HCT116 (cell line): ENCODE measurements at regions of chr2 and their contacts with region 1.

Region 1: DNA sequence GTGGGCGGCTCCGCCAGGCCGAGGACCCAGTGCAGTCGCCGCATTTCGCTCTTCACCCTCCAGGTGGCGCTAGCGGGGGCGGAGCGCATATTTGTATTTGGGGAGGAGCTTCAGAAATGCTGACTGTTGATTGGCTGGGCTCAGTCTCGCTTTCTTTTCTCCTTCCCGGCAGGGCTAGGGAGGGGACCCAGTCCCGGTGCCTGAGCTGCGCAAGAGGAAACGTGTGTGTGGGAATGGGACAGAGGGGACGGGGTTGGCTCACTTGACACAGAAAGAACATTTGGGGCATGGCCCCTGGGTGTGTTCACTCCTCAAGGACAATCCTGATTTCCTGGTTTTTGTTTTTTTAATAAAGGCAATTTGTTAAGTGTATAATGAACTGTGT is 20.3 kb upstream of the DNMT3A start:
- DNase-seq: peak; percentile 80
- ATAC-seq: peak; percentile 98
- H3K4me3 ChIP-seq: peak overlapping the region; percentile 32 to 49
- H3K27ac ChIP-seq: no peak overlapping the region
- H3K4me1 ChIP-seq: peaks cover 0 to 14% of the 10 kb centered on the region in 2 experiments; a peak in 2 of 4 replicates
- H3K27me3 ChIP-seq: no peaks in the 10 kb centered on the region
- CTCF ChIP-seq: peak; percentile 74 to 96 (median 93)
- POLR2A ChIP-seq: peak; percentile 81
- RAD21 ChIP-seq: no peak

Region 2: GRCh38 chr2:25098670-25099486 is 263.2 kb before region 1 on chr2:
- CTCF ChIA-PET with region 1: no interaction called
- POLR2A ChIA-PET with region 1: no interaction called
- RAD21 ChIA-PET with region 1: no interaction called
- intact Hi-C with region 1: no loop called
- DNase-seq: no peak
- ATAC-seq: no peak
- H3K4me3 ChIP-seq: no peak overlapping the region
- H3K27ac ChIP-seq: no peak overlapping the region
- H3K4me1 ChIP-seq: peaks cover 0 to 8% of the 10 kb centered on the region in 2 experiments; a peak in 2 of 4 replicates
- H3K27me3 ChIP-seq: no peaks in the 10 kb centered on the region
- CTCF ChIP-seq: no peak
- POLR2A ChIP-seq: no peak
- RAD21 ChIP-seq: no peak

Region 3: DNA sequence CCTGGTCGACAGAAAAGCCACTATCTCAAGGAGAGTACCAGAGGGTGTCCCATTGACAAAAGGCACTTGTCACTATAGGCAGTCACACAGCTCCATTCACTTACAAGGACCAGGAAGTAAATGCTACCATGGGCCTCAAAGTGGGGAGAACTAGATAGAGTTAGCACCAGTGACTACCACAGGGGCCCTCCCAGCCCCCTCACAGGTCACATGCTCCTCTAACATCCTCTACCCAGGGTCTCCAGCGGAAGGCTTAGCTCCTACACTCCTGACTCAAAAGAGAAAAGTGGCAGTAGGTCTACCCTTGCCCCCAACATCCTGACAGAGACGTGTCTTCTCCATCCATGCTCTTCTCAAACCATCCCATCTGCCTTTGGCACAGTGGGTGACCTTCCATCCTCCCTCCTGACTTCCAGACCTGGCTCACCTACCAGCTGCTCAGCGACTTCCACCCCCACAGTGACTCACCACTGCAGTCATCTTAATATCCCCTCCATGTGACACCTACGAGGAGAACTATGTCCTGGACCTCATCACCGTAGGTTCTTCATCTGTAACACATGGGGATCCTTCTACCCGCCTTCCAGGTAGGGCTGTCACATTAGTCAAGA is 14.7 kb before region 1 on chr2:
- CTCF ChIA-PET with region 1: interaction called, 48 read pairs
- POLR2A ChIA-PET with region 1: interaction called, 3 read pairs
- RAD21 ChIA-PET with region 1: no interaction called
- intact Hi-C with region 1: no loop called
- DNase-seq: peak; percentile 32
- ATAC-seq: peak; percentile 82
- H3K4me3 ChIP-seq: no peak overlapping the region; a peak in 1 of 4 replicates
- H3K27ac ChIP-seq: no peak overlapping the region
- H3K4me1 ChIP-seq: peaks cover 15 to 30% of the 10 kb centered on the region in 2 experiments
- H3K27me3 ChIP-seq: no peaks in the 10 kb centered on the region
- CTCF ChIP-seq: no peak
- POLR2A ChIP-seq: no peak
- RAD21 ChIP-seq: no peak

Region 4: DNA sequence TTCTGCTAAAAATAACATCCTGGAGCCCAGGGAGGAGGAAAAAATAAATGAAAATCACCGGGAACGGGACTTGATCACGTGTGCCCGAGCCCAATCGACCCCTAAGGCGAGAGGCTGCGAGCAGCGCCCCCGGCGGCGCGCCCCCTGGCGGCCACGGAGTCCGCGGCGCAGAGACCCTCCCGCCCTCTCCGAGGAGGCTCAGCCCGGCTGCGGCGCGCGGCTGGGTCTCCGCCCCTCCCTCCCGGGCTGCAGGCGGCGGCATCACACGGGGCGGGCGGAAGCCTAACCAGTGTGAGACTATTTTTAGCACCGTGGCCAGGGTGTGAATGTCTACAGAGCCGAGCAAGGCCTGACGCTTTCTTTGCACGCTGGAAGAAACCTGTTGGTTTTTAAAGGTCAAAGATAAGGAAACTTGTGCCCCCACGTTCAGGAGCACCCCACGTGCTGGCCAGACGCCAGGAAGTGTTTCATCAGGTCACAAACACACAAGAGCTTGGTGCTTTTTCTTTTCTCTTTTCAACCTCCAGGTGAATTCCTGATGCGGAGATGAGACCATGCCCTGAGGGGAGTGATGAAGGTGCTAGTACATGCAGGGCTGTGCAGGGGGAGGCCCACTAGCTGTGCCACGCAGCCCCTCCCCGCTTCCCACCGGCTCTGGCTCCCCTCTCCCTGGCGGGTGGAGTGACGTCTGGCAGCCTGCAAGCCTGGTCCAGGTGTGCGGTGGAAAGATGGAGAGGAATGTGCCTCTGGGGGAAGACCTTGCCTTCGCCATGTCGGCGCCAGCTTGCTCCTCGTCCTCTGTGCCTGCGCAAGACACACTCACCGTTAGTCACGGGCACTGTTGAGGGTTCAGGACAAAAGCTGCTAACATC is 14.9 kb after region 1 on chr2:
- CTCF ChIA-PET with region 1: interaction called, 54 read pairs
- POLR2A ChIA-PET with region 1: interaction called, 4 read pairs
- RAD21 ChIA-PET with region 1: interaction called in 1 of 2 experiments, 3 read pairs
- intact Hi-C with region 1: no loop called
- DNase-seq: peak; percentile 44
- ATAC-seq: peak; percentile 98
- H3K4me3 ChIP-seq: peak overlapping the region; percentile 16 to 38; a peak in 2 of 4 replicates
- H3K27ac ChIP-seq: peak overlapping the region; percentile 47
- H3K4me1 ChIP-seq: peaks cover 12 to 19% of the 10 kb centered on the region in 2 experiments
- H3K27me3 ChIP-seq: no peaks in the 10 kb centered on the region
- CTCF ChIP-seq: peak; percentile 86 to 88 (median 86)
- POLR2A ChIP-seq: no peak
- RAD21 ChIP-seq: peak; percentile 67